ENCODE measurements at regions of chr1 and their contacts with region 1.

Region 1: GRCh38 chr1:241525026-241525425 is 5.5 kb upstream of the FH start:
- DNase-seq: no peak
- ATAC-seq: no peak
- H3K4me3 ChIP-seq: no peak overlapping the region
- H3K4me3 Mint-ChIP-seq: no peak overlapping the region
- H3K27ac ChIP-seq: no peak overlapping the region
- H3K27ac Mint-ChIP-seq: no peak overlapping the region
- H3K4me1 ChIP-seq: no peaks in the 10 kb centered on the region
- H3K4me1 Mint-ChIP-seq: no peaks in the 10 kb centered on the region
- H3K27me3 ChIP-seq: peaks cover 0 to 3% (median 0%) of the 10 kb centered on the region in 4 experiments
- H3K27me3 Mint-ChIP-seq: peaks cover 3% of the 10 kb centered on the region
- CTCF ChIP-seq: no peak

Region 2: GRCh38 chr1:241627453-241628259 is 102.6 kb after region 1 on chr1:
- CTCF ChIA-PET with region 1: interaction called, 13 read pairs
- POLR2A ChIA-PET with region 1: no interaction called
- intact Hi-C with region 1: no loop called
- DNase-seq: peak; percentile 78
- ATAC-seq: peak; percentile 83
- H3K4me3 ChIP-seq: peak overlapping the region in 4 of 5 experiments; percentile 6 to 41 (median 17)
- H3K4me3 Mint-ChIP-seq: peak overlapping the region; percentile 63
- H3K27ac ChIP-seq: peak overlapping the region; percentile 66 to 71
- H3K27ac Mint-ChIP-seq: peak overlapping the region; percentile 88
- H3K4me1 ChIP-seq: peaks cover 14 to 25% of the 10 kb centered on the region in 2 donors
- H3K4me1 Mint-ChIP-seq: peaks cover 42% of the 10 kb centered on the region
- H3K27me3 ChIP-seq: no peaks in the 10 kb centered on the region
- H3K27me3 Mint-ChIP-seq: no peaks in the 10 kb centered on the region
- CTCF ChIP-seq: peak; percentile 82

Region 3: DNA sequence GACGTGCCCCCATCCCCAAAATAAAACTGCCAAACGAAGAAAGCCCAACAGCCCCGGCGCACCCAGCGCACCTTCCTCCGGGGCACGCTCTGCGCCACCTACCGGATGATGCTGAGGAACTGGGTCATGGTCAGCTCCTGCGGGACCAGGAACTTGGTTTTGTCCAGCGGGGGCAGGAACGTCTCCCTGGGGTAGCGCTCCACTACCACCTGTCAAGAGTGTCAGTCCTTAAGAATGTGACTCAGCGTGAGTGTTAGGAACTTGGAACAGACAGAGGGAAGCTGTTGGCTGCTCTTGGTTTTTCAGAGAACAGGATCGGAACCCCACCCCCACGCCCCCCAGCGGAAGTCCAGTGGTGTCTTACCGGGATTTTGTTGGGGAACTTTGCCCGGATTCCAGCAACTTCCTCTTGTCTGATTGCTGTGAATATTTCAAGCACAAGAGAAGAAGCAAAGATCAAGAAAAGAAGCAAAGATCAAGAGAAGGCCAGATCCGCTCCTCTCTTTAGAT is 473.4 kb after region 1 on chr1:
- CTCF ChIA-PET with region 1: interaction called, 13 read pairs
- POLR2A ChIA-PET with region 1: no interaction called
- intact Hi-C with region 1: no loop called
- DNase-seq: peak; percentile 75
- ATAC-seq: peak; percentile 85
- H3K4me3 ChIP-seq: peak overlapping the region; percentile 30 to 70 (median 50)
- H3K4me3 Mint-ChIP-seq: peak overlapping the region; percentile 85
- H3K27ac ChIP-seq: no peak overlapping the region
- H3K27ac Mint-ChIP-seq: no peak overlapping the region
- H3K4me1 ChIP-seq: peaks cover 0 to 7% of the 10 kb centered on the region in 2 donors
- H3K4me1 Mint-ChIP-seq: peaks cover 5% of the 10 kb centered on the region
- H3K27me3 ChIP-seq: peaks cover 0 to 1% (median 0%) of the 10 kb centered on the region in 4 experiments
- H3K27me3 Mint-ChIP-seq: peaks cover 2% of the 10 kb centered on the region
- CTCF ChIP-seq: peak; percentile 77

Measured in B cell (primary cell).